GM12878 (cell line): ENCODE measurements at regions of chr9 and their contacts with region 1.

Region 1: DNA sequence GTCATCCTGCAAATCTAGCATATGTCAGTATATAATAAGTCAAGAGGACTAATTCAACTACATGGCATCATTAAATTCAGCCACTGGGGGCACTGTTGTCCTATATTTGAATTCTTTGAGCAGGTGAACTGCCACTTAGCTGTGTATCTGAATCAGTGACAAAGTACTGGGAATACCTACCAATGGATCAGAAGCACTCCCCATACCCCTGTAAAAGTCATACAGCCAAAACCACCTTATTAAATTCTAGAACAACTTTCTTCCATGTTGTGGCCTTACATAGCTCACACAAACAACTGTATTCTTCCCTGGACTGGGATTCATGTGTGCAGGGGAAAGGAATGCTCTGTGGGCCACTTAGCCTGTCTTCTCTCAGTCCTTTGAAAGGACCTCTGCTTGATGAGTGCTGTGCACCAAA is 57.4 kb upstream of the PLPP6 start:
- DNase-seq: peak; percentile 50
- ATAC-seq: peak; percentile 97
- H3K4me3 ChIP-seq: no peak overlapping the region
- H3K27ac ChIP-seq: no peak overlapping the region
- H3K4me1 ChIP-seq: no peaks in the 10 kb centered on the region
- H3K27me3 ChIP-seq: no peaks in the 10 kb centered on the region
- CTCF ChIP-seq: peak; percentile 50 to 75 (median 62)
- EP300 ChIP-seq: no peak
- POLR2A ChIP-seq: no peak
- RAD21 ChIP-seq: peak; percentile 77

Region 2: GRCh38 chr9:4382722-4383317 is 221.9 kb before region 1 on chr9:
- CTCF ChIA-PET with region 1: interaction called, 7 read pairs
- POLR2A ChIA-PET with region 1: no interaction called
- RAD21 ChIA-PET with region 1: interaction called, 3 read pairs
- SMC1A ChIA-PET with region 1: interaction called, 8 read pairs
- in situ Hi-C with region 1: no loop called
- intact Hi-C with region 1: loop called (anchors 2 kb)
- DNase-seq: peak; percentile 40
- ATAC-seq: peak; percentile 87
- H3K4me3 ChIP-seq: no peak overlapping the region
- H3K27ac ChIP-seq: no peak overlapping the region
- H3K4me1 ChIP-seq: peaks cover 5% of the 10 kb centered on the region; the same call in 1 of the 2 replicates
- H3K27me3 ChIP-seq: no peaks in the 10 kb centered on the region
- CTCF ChIP-seq: peak; percentile 51 to 73 (median 58); a peak in 5 of 6 replicates
- EP300 ChIP-seq: no peak
- POLR2A ChIP-seq: no peak
- RAD21 ChIP-seq: peak; percentile 87

Region 3: GRCh38 chr9:4588721-4589120 is 16.0 kb before region 1 on chr9:
- CTCF ChIA-PET with region 1: interaction called, 18 read pairs
- POLR2A ChIA-PET with region 1: no interaction called
- RAD21 ChIA-PET with region 1: interaction called, 3 read pairs
- SMC1A ChIA-PET with region 1: no interaction called
- in situ Hi-C with region 1: no loop called
- intact Hi-C with region 1: no loop called
- DNase-seq: no peak
- ATAC-seq: no peak
- H3K4me3 ChIP-seq: no peak overlapping the region
- H3K27ac ChIP-seq: no peak overlapping the region
- H3K4me1 ChIP-seq: no peaks in the 10 kb centered on the region
- H3K27me3 ChIP-seq: no peaks in the 10 kb centered on the region
- CTCF ChIP-seq: no peak
- EP300 ChIP-seq: no peak
- POLR2A ChIP-seq: no peak
- RAD21 ChIP-seq: no peak

Region 4: GRCh38 chr9:4640027-4640426 is 35.3 kb after region 1 on chr9:
- CTCF ChIA-PET with region 1: interaction called, 12 read pairs
- POLR2A ChIA-PET with region 1: no interaction called
- RAD21 ChIA-PET with region 1: interaction called, 7 read pairs
- SMC1A ChIA-PET with region 1: interaction called, 3 read pairs
- in situ Hi-C with region 1: no loop called
- intact Hi-C with region 1: no loop called
- DNase-seq: no peak
- ATAC-seq: 0 out of 3 replicates have a peak, but pooled peaks have one; percentile 29
- H3K4me3 ChIP-seq: no peak overlapping the region
- H3K27ac ChIP-seq: no peak overlapping the region
- H3K4me1 ChIP-seq: no peaks in the 10 kb centered on the region
- H3K27me3 ChIP-seq: no peaks in the 10 kb centered on the region
- CTCF ChIP-seq: peak; percentile 21 to 42 (median 31); a peak in 3 of 6 replicates
- EP300 ChIP-seq: no peak
- POLR2A ChIP-seq: no peak
- RAD21 ChIP-seq: peak; percentile 60

Region 5: GRCh38 chr9:4750023-4750673 is 145.5 kb after region 1 on chr9:
- CTCF ChIA-PET with region 1: interaction called, 6 read pairs
- POLR2A ChIA-PET with region 1: no interaction called
- RAD21 ChIA-PET with region 1: interaction called, 3 read pairs
- SMC1A ChIA-PET with region 1: interaction called, 5 read pairs
- in situ Hi-C with region 1: no loop called
- intact Hi-C with region 1: loop called (anchors 5 kb)
- DNase-seq: no peak
- ATAC-seq: peak; percentile 86
- H3K4me3 ChIP-seq: no peak overlapping the region
- H3K27ac ChIP-seq: no peak overlapping the region
- H3K4me1 ChIP-seq: peaks cover 4% of the 10 kb centered on the region; the same call in 1 of the 2 replicates
- H3K27me3 ChIP-seq: no peaks in the 10 kb centered on the region
- CTCF ChIP-seq: peak; percentile 54 to 59 (median 58); a peak in 5 of 6 replicates
- EP300 ChIP-seq: no peak
- POLR2A ChIP-seq: no peak
- RAD21 ChIP-seq: peak; percentile 72